IMR-90 (cell line): ENCODE measurements at regions of chr17 and their contacts with region 1.

Region 1: GRCh38 chr17:63611354-63611753 is 10.7 kb downstream of the TACO1 start:
- DNase-seq: no peak
- ATAC-seq: no peak
- H3K4me3 ChIP-seq: no peak overlapping the region
- H3K27ac ChIP-seq: no peak overlapping the region
- H3K4me1 ChIP-seq: no peaks in the 10 kb centered on the region
- H3K27me3 ChIP-seq: no peaks in the 10 kb centered on the region
- CTCF ChIP-seq: no peak
- POLR2A ChIP-seq: no peak
- RAD21 ChIP-seq: no peak

Region 2: DNA sequence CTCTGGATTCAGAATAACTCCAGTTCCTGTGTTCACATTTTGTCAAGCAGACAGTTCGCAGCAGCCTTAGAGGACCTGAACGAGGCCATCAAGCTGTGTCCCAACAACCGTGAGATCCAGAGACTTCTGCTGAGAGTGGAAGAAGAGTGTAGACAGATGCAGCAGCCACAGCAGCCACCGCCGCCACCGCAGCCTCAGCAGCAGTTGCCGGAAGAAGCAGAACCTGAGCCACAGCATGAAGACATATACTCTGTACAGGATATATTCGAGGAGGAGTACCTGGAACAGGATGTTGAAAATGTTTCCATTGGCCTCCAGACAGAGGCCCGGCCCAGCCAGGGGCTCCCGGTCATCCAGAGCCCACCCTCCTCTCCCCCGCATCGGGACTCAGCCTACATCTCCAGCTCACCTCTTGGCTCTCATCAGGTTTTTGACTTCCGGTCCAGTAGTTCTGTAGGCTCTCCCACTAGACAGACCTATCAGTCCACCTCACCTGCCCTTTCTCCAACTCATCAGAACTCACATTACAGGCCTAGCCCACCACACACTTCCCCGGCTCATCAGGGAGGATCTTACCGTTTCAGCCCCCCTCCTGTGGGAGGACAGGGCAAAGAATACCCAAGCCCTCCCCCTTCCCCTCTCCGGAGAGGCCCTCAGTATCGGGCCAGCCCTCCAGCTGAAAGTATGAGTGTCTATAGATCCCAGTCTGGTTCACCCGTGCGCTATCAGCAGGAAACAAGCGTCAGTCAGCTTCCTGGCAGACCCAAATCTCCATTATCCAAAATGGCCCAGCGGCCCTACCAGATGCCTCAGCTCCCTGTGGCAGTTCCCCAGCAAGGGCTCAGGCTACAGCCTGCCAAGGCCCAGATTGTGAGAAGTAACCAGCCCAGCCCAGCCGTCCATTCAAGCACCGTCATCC is 191.1 kb before region 1 on chr17:
- CTCF ChIA-PET with region 1: interaction called, 22 read pairs
- POLR2A ChIA-PET with region 1: no interaction called
- dilution Hi-C with region 1: no loop called
- in situ Hi-C with region 1: loop called (anchors 5 kb)
- intact Hi-C with region 1: loop called (anchors 1 kb)
- DNase-seq: no peak
- ATAC-seq: no peak
- H3K4me3 ChIP-seq: no peak overlapping the region
- H3K27ac ChIP-seq: no peak overlapping the region
- H3K4me1 ChIP-seq: no peaks in the 10 kb centered on the region
- H3K27me3 ChIP-seq: no peaks in the 10 kb centered on the region
- CTCF ChIP-seq: no peak
- POLR2A ChIP-seq: no peak
- RAD21 ChIP-seq: no peak

Region 3: DNA sequence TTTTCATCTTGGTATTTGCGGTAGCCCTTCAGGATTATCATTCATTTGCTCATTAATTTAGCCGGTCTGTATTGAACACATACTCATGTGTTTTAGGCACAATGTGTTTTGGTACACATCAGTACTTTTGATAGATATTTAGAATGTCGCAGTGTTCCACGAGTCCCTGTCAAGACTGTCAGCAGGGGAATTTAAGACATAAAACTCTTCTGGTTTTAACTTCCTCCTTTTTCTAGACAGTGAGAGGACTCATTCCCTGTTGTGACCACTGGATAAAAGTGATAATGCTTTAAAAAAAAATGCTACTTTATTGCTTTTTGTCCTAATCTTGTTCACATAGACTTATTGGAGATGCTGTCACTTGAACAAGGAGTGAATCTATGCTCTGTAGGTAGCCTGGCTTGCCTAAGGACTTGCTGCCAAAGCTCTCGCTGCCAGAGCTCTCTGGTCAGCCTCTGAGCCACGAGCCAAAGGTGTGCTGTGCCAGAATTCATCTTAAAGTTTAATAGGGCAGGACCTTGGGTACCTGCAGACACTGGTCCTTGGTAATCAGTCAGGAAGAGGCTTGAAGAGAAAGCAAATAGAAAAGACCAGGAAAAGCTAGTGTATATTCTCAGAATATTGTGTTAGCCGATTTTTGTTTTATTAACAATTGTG is 55.7 kb before region 1 on chr17:
- CTCF ChIA-PET with region 1: no interaction called
- POLR2A ChIA-PET with region 1: no interaction called
- dilution Hi-C with region 1: no loop called
- in situ Hi-C with region 1: no loop called
- intact Hi-C with region 1: no loop called
- DNase-seq: no peak
- ATAC-seq: no peak
- H3K4me3 ChIP-seq: no peak overlapping the region
- H3K27ac ChIP-seq: no peak overlapping the region
- H3K4me1 ChIP-seq: peaks cover 7% of the 10 kb centered on the region
- H3K27me3 ChIP-seq: no peaks in the 10 kb centered on the region
- CTCF ChIP-seq: no peak
- POLR2A ChIP-seq: no peak
- RAD21 ChIP-seq: no peak

Region 4: DNA sequence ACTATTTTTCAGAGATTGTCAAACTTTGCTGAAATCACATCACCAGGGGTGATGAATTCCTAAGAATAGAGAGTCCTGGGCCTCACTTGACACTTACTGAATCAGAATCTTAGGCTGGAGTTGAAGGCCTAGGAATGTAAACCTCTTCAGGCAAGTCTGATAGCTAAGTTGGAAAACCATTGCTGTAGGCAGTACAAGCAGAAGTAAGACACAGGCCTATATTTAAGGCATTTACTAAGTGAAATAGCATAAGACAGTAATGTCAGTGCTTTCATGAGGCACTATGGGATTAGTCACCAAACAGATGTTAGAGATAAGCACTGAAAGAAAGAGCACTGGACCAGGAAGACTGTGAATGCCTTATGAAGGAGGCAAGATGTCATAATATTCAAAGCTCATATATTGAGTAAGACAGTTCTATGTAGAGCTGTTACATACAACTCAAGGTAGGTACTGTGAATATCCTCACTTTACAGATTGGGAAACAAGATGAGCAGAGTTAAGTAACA is 39.5 kb before region 1 on chr17:
- CTCF ChIA-PET with region 1: no interaction called
- POLR2A ChIA-PET with region 1: no interaction called
- dilution Hi-C with region 1: no loop called
- in situ Hi-C with region 1: no loop called
- intact Hi-C with region 1: no loop called
- DNase-seq: peak; percentile 93
- ATAC-seq: peak; percentile 93
- H3K4me3 ChIP-seq: no peak overlapping the region
- H3K27ac ChIP-seq: no peak overlapping the region; the same call in 1 of the 2 replicates
- H3K4me1 ChIP-seq: peaks cover 4% of the 10 kb centered on the region
- H3K27me3 ChIP-seq: no peaks in the 10 kb centered on the region
- CTCF ChIP-seq: no peak
- POLR2A ChIP-seq: no peak
- RAD21 ChIP-seq: no peak